ENCODE measurements at regions of chr1 and their contacts with region 1.

Region 1: GRCh38 chr1:24254783-24255182 is 64.4 kb upstream of the GRHL3 start:
- DNase-seq: no peak
- H3K4me3 ChIP-seq: no peak overlapping the region
- H3K27ac ChIP-seq: no peak overlapping the region
- H3K27me3 ChIP-seq: peaks cover 0 to 4% (median 0%) of the 10 kb centered on the region in 45 donors
- CTCF ChIP-seq: no peak

Region 2: DNA sequence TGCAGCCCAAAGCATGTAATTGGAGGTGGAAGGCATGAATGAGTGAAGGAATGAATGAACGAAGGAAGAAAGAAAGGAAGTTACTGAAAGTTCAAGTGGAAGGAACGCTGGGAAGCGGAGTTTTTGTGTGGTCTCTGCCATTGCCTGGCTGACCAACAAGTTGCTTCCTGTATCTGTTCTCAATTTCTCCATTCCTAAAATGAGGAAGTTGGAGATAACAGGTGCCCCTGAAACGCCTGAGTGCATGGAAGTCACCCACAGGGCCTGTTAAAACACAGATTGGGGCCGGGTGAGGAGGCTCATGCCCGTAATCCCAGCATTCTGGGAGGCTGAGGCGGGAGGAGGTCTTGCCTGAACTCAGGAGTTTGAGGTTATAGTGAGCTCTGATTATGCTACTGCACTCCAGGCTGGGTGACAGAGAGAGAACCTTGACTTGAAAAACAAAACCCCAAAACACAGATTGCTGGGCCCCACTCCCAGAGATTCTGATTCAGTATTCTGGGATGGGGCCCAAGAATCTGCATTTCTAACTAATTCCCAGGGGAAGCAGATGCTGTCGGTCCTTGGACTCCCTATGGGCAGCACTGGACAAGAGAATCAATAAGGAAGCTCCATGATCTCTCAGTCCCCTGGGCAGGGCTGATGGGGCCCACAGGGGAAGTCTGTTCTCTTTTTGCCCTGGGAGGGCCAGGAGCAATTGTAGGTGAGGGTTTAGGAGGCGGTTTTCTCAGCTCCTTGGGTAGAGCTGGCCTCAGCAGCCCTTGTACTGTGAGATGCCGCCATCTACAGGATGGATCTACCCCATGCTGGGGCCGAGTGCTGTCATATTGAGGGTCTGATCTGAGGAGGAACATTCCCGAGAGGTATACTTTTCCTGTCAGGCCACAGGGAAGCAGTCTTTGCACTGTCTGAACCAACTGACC is 338.3 kb before region 1 on chr1:
- intact Hi-C with region 1: no loop called
- DNase-seq: peak in 7 of 10 donors; percentile 26 to 65 (median 48)
- H3K4me3 ChIP-seq: no peak overlapping the region
- H3K27ac ChIP-seq: no peak overlapping the region
- H3K27me3 ChIP-seq: peaks cover 0 to 15% (median 0%) of the 10 kb centered on the region in 45 donors
- CTCF ChIP-seq: peak in 52 of 56 donors; percentile 14 to 63 (median 45)

Region 3: DNA sequence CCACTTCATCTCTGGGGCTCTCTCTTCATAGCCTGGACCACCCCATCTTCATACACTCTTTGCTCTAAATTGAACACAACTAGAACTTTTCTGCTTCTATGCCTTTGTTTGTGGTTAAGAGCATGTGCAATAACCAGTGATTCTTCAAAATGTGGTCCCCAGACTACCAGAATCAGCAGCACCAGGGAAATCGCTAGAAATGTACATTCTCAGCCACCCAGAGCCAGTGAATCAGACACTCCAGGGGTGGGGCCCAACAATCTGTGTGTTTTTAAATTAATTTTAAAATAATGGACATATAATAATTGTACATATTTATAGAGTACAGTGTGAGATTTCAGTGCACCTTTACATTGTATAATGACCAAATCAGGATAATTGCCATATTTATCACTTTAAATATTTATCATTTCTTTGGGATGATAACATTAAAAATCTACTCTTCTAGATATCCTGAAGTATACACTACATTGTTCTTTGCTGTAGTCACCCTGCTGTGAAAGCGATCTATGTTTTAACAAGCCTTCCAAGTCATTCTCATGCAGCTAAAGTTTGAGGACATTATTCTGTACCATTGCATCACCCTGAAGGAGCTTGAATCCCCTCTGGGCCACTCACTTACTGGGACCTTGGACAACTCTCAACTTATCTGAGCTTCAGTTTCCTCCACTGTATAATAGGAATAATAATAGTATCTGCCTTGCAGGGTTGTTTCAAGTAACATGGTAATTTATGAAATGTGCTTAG is 75.2 kb after region 1 on chr1:
- intact Hi-C with region 1: loop called in 1 of 2 experiments (anchors 2 kb)
- DNase-seq: no peak
- H3K4me3 ChIP-seq: no peak overlapping the region
- H3K27ac ChIP-seq: no peak overlapping the region
- H3K27me3 ChIP-seq: no peaks in the 10 kb centered on the region
- CTCF ChIP-seq: no peak

Measured in dorsolateral prefrontal cortex (tissue), 120 donors.